ENCODE measurements at regions of chr19 and their contacts with region 1.

Region 1: DNA sequence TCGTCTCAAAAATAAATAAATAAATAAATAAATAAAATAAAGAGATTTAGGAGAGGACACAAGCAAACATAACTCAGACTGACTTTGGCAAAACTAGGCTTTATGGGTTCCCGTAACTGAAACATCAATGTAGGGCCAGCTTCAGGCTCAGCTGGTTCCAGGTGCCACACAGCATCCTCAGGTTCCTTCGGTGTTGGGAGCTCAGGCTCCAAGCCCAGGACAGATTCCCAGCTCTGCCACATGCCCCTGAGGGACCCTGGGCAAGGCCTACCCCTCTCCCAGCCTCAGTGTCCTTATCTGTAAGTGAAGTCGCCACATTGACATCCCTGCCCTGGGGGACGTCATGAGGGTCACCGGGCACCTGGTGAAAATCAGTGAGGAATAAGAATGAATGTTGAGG is 18.7 kb downstream of the MISP start:
- DNase-seq: no peak
- CTCF ChIP-seq: no peak

Region 2: GRCh38 chr19:757811-758668 is 11.6 kb before region 1 on chr19:
- CTCF ChIA-PET with region 1: interaction called, 4 read pairs
- POLR2A ChIA-PET with region 1: interaction called, 12 read pairs
- DNase-seq: no peak
- CTCF ChIP-seq: no peak

Region 3: GRCh38 chr19:835210-835810 is 65.7 kb after region 1 on chr19:
- CTCF ChIA-PET with region 1: no interaction called
- POLR2A ChIA-PET with region 1: no interaction called
- DNase-seq: no peak
- CTCF ChIP-seq: no peak

Region 4: GRCh38 chr19:1540365-1540925 is 770.8 kb after region 1 on chr19:
- CTCF ChIA-PET with region 1: no interaction called
- POLR2A ChIA-PET with region 1: no interaction called
- DNase-seq: no peak
- CTCF ChIP-seq: no peak

Measured in GM10248 (cell line).